Activated CD4-positive, alpha-beta memory T cell treated with anti-CD3 and anti-CD28 coated beads, Interleukin-2, amount 10 ng/mL, durations not matched to agents 7 days and 5 days (primary cell): ENCODE measurements at regions of chr1 and their contacts with region 1.

Region 1: GRCh38 chr1:19462781-19463503 is 22.4 kb downstream of the CAPZB start:
- DNase-seq: peak; percentile 85
- H3K4me3 Mint-ChIP-seq: peak overlapping the region; percentile 67
- H3K27ac Mint-ChIP-seq: peak overlapping the region; percentile 83
- H3K4me1 Mint-ChIP-seq: peaks cover 87% of the 10 kb centered on the region
- H3K27me3 Mint-ChIP-seq: no peaks in the 10 kb centered on the region

Region 2: GRCh38 chr1:19325958-19326748 is 136.8 kb before region 1 on chr1:
- CTCF ChIA-PET with region 1: no interaction called
- POLR2A ChIA-PET with region 1: no interaction called
- DNase-seq: no peak
- H3K4me3 Mint-ChIP-seq: no peak overlapping the region
- H3K27ac Mint-ChIP-seq: no peak overlapping the region
- H3K4me1 Mint-ChIP-seq: no peaks in the 10 kb centered on the region
- H3K27me3 Mint-ChIP-seq: no peaks in the 10 kb centered on the region

Region 3: DNA sequence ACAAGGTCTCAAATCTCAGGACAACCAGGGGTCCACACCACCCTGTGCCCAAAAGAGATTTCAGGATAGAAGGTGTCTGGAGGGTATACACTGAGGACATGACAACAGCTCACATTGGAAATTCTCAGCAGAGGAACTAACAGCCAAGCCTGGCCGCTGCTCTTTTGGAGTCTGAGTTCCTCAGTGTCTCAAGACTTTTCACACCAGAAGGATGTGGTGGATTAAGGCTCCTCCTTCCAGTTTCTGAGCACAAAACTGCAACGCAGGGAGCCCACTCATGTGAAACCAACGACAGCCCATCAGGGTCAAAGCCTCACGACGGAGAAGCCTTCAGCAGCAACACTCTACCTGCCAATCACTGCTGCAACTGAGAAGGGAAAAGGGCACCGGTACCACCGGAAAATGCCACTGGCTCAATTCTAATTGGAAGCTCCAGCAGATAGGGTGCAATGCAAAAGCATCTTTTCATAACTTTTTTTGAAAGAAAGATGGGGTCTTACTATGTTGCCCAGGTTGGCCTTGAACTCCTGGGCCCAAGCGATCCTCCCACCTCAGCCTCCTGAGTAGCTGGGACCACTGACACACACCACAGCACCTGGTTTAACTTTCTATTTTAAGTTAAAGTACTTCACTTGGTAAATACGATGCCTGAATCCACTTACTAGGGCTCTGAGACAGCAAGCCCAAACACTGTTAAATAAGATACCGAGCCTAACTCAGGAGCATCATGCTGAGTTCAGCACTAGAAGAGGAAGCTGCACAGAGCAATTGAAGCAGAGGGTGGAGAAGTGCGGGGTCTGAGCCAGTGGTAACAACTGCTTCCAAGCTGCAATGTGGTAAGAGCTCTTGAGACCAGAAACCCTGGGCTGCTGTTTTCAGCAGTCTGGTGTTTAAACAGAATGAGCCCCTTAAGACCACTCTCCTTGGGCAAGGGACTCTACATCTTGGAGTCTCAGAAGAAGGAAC is 14.6 kb after region 1 on chr1:
- CTCF ChIA-PET with region 1: interaction called, 4 read pairs
- POLR2A ChIA-PET with region 1: interaction called, 107 read pairs
- DNase-seq: peak; percentile 60
- H3K4me3 Mint-ChIP-seq: peak overlapping the region; percentile 59
- H3K27ac Mint-ChIP-seq: peak overlapping the region; percentile 93
- H3K4me1 Mint-ChIP-seq: peaks cover 96% of the 10 kb centered on the region
- H3K27me3 Mint-ChIP-seq: no peaks in the 10 kb centered on the region

Region 4: DNA sequence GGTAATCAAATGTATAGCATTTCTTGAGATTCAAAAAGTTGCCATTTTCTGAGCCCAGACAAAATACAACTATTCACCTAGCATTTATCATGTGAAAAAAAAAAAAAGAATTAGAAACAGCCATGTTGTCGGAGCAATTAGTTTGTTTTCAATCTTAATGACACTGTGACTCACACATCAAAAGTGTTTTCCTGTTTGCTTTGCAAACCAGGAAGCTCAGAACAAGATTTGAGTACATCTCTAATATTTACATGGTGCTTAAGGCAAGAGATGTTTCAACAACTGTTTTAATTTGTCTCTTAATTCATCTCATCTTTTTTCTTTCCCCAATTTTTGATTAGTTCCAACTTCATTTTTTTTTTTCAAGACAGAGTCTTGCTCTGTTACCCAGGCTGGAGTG is 84.9 kb after region 1 on chr1:
- CTCF ChIA-PET with region 1: no interaction called
- POLR2A ChIA-PET with region 1: no interaction called
- DNase-seq: no peak
- H3K4me3 Mint-ChIP-seq: no peak overlapping the region
- H3K27ac Mint-ChIP-seq: no peak overlapping the region
- H3K4me1 Mint-ChIP-seq: peaks cover 4% of the 10 kb centered on the region
- H3K27me3 Mint-ChIP-seq: peaks cover 31% of the 10 kb centered on the region